ENCODE measurements at regions of chr13 and their contacts with region 1.

Region 1: DNA sequence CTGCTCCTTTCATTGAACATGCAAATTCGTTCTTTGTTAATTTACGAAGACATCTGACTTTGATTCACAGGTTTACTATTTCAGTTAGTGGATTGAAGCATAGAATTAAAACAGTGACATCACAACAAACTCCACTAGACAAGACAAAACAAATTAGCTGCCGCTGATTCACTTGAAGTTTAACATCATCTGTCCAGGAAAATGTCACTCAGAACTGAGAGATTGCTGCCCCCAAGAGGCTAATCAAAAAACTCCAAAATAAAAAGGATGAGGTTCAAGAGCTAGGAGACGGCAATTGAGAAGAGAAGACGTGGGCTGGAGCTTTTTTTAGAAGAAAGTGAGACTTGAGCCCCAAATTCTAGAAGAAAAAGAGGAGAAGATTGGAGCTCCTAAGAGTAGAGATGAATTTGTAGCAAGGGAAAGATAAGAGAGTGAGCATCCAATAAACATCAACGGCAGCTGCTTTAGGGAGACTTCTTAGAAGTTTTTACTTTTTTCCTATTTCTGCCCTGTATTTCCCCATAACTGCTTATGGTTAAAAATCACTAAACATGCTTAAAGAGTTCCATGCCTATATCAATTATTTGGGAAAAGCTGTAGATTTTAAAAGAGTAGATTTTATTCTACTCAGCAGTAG is 40.8 kb upstream of the TPP2 start:
- DNase-seq: peak in 4 of 5 donors; percentile 22 to 40 (median 32)
- H3K4me3 ChIP-seq: no peak overlapping the region
- H3K4me3 Mint-ChIP-seq: no peak overlapping the region
- H3K27ac ChIP-seq: no peak overlapping the region
- H3K27ac Mint-ChIP-seq: no peak overlapping the region
- H3K4me1 ChIP-seq: no peaks in the 10 kb centered on the region
- H3K4me1 Mint-ChIP-seq: peaks cover 0 to 4% (median 1%) of the 10 kb centered on the region in 4 donors
- H3K27me3 ChIP-seq: no peaks in the 10 kb centered on the region
- H3K27me3 Mint-ChIP-seq: no peaks in the 10 kb centered on the region

Region 2: GRCh38 chr13:101514788-101515187 is 1041.2 kb before region 1 on chr13:
- CTCF ChIA-PET with region 1: interaction called, 12 read pairs
- POLR2A ChIA-PET with region 1: no interaction called
- intact Hi-C with region 1: loop called (anchors 1 kb)
- DNase-seq: peak in 4 of 5 donors; percentile 32 to 34 (median 32)
- H3K4me3 ChIP-seq: no peak overlapping the region
- H3K4me3 Mint-ChIP-seq: no peak overlapping the region
- H3K27ac ChIP-seq: no peak overlapping the region
- H3K27ac Mint-ChIP-seq: no peak overlapping the region
- H3K4me1 ChIP-seq: peaks cover 12% of the 10 kb centered on the region
- H3K4me1 Mint-ChIP-seq: peaks cover 7 to 13% (median 10%) of the 10 kb centered on the region in 4 donors
- H3K27me3 ChIP-seq: no peaks in the 10 kb centered on the region
- H3K27me3 Mint-ChIP-seq: peaks cover 0 to 2% of the 10 kb centered on the region in 2 donors

Region 3: GRCh38 chr13:101942038-101942437 is 614.0 kb before region 1 on chr13:
- CTCF ChIA-PET with region 1: no interaction called
- POLR2A ChIA-PET with region 1: no interaction called
- intact Hi-C with region 1: loop called (anchors 5 kb)
- DNase-seq: no peak
- H3K4me3 ChIP-seq: no peak overlapping the region
- H3K4me3 Mint-ChIP-seq: no peak overlapping the region
- H3K27ac ChIP-seq: no peak overlapping the region
- H3K27ac Mint-ChIP-seq: no peak overlapping the region
- H3K4me1 ChIP-seq: no peaks in the 10 kb centered on the region
- H3K4me1 Mint-ChIP-seq: no peaks in the 10 kb centered on the region
- H3K27me3 ChIP-seq: no peaks in the 10 kb centered on the region
- H3K27me3 Mint-ChIP-seq: peaks cover 5 to 7% of the 10 kb centered on the region in 2 donors

Region 4: DNA sequence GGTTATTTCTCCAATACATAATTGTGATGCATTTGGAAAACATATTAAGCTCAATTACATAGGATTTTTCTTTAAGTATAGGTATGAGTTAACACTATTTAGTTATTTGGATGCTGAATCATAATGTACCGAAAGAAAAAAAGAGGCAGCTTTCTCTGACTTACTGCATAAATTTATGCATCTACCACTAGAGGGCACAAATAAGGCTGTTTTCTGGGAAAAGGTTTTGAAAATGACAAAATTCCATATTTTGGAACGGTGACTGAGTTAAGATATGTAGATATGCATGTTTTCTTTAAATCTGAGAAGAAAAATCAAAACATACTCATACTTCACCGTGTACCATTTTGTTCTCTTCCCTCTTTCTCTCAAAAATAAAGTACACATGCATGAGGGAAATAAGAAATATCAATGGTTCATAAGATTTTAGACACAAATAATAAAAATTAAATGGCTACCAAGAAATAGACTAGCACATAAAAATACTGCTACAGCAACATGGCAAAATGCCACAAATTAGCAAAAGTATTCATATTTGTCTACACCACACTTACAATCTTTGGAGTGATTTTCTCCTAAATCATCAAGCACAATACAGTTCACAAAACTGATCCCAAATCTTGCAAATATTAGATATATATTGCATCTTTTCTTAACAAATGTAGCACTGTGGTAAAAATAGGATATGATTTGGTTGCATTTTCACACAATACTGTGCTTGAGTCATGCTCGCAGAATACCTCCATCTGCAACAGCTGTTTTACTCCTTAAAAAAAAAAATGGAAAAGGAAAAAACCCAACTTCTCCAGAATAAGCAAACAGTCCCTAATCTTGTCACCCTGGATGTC is 414.2 kb before region 1 on chr13:
- CTCF ChIA-PET with region 1: interaction called, 13 read pairs
- POLR2A ChIA-PET with region 1: no interaction called
- intact Hi-C with region 1: no loop called
- DNase-seq: peak in 1 of 5 donors; percentile 1
- H3K4me3 ChIP-seq: no peak overlapping the region
- H3K4me3 Mint-ChIP-seq: no peak overlapping the region
- H3K27ac ChIP-seq: no peak overlapping the region
- H3K27ac Mint-ChIP-seq: no peak overlapping the region
- H3K4me1 ChIP-seq: no peaks in the 10 kb centered on the region
- H3K4me1 Mint-ChIP-seq: no peaks in the 10 kb centered on the region
- H3K27me3 ChIP-seq: no peaks in the 10 kb centered on the region
- H3K27me3 Mint-ChIP-seq: no peaks in the 10 kb centered on the region